Panc1 (cell line): ENCODE measurements at regions of chr18 and their contacts with region 1.

Region 1: DNA sequence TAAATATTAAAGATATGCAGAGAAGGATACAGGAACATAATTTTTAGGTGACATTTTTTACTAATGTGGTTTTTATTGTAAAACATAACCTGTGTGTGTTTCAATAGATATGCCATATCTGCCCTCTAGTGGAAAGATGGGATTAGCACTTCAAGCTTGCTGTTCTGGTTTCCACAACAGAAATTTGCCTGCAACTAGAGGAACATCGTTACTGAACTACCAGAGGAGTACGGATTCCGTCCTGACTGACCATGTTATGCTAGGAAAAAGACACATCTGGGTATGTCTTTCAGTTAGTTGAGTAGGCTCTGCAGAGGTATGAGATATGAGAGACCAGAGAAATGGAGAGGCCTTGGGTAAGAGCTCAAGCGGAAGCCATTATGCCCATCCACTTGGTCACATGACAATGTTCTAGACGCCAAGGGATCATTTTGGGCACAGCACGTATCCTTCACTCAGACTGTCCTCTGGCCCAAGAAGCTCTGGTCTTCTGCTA is 104.9 kb downstream of the MBD2 start:
- DNase-seq: peak; percentile 58
- ATAC-seq: peak; percentile 73; the same call in 1 of the 2 replicates
- H3K4me3 ChIP-seq: peak overlapping the region in 1 of 2 experiments; percentile 37; a peak in 2 of 4 replicates
- H3K27ac ChIP-seq: no peak overlapping the region
- H3K4me1 ChIP-seq: no peaks in the 10 kb centered on the region
- H3K27me3 ChIP-seq: no peaks in the 10 kb centered on the region
- CTCF ChIP-seq: peak; percentile 61

Region 2: DNA sequence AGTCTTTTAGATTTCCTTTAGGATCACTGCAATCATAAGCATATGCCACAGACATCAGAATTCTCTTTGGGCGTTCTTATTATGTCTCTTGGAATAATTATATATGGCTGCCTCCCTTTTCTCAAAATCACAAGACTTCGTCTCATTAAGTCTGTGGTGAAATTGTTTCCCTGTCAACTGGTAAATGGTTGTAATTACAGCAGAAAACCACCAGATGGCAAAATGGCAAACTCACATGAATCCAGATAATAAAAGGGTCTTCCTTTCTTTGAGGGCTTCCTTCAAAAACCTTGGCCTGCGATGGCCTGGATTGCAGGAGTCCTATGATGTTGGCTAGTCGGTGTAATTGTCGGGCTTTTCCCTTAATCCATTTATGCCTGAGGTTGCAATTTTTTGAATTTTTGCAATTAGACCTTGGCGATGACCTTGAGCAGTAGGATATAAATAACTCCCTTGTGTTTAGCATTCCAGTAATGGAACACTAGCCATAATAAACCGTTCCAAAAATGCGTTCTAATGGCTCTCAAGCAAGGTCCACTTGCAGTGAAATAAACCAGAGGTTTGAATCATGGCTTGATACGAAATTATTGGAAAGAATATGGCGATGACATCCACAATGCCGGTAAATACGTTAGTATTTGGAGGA is 551.5 kb before region 1 on chr18:
- CTCF ChIA-PET with region 1: no interaction called
- POLR2A ChIA-PET with region 1: no interaction called
- in situ Hi-C with region 1: no loop called
- intact Hi-C with region 1: loop called (anchors 2 kb)
- DNase-seq: no peak
- ATAC-seq: no peak
- H3K4me3 ChIP-seq: no peak overlapping the region
- H3K27ac ChIP-seq: no peak overlapping the region
- H3K4me1 ChIP-seq: no peaks in the 10 kb centered on the region
- H3K27me3 ChIP-seq: no peaks in the 10 kb centered on the region
- CTCF ChIP-seq: peak; percentile 49

Region 3: DNA sequence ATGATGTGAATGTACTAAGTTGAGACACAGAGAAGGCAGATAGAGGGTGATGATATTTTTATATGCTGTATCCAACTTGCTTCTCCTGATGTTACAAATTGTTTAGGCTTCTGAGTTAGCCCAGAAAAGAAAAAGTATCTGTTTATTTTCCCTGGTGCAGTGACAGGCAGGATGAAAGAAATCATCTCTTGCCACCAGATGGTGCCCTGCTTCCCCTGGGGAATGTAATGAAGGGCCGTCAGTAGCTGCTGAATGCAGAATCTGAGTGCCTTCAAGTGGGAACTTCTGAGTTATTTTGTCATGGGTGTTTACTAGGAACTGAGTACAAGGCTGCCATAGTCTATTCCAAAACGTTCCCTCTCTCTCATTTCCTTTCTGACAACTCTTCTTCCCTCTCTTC is 420.7 kb before region 1 on chr18:
- CTCF ChIA-PET with region 1: interaction called, 3 read pairs
- POLR2A ChIA-PET with region 1: no interaction called
- in situ Hi-C with region 1: no loop called
- intact Hi-C with region 1: loop called (anchors 10 kb)
- DNase-seq: no peak
- ATAC-seq: no peak
- H3K4me3 ChIP-seq: no peak overlapping the region
- H3K27ac ChIP-seq: no peak overlapping the region
- H3K4me1 ChIP-seq: no peaks in the 10 kb centered on the region
- H3K27me3 ChIP-seq: no peaks in the 10 kb centered on the region
- CTCF ChIP-seq: peak; percentile 38

Region 4: GRCh38 chr18:53909668-53910067 is 209.9 kb before region 1 on chr18:
- CTCF ChIA-PET with region 1: no interaction called
- POLR2A ChIA-PET with region 1: no interaction called
- in situ Hi-C with region 1: no loop called
- intact Hi-C with region 1: loop called (anchors 10 kb)
- DNase-seq: no peak
- ATAC-seq: no peak
- H3K4me3 ChIP-seq: no peak overlapping the region
- H3K27ac ChIP-seq: no peak overlapping the region
- H3K4me1 ChIP-seq: no peaks in the 10 kb centered on the region
- H3K27me3 ChIP-seq: no peaks in the 10 kb centered on the region
- CTCF ChIP-seq: peak; percentile 16; the same call in 1 of the 2 replicates

Region 5: GRCh38 chr18:54191352-54191751 is 71.8 kb after region 1 on chr18:
- CTCF ChIA-PET with region 1: no interaction called
- POLR2A ChIA-PET with region 1: no interaction called
- in situ Hi-C with region 1: no loop called
- intact Hi-C with region 1: no loop called
- DNase-seq: no peak
- ATAC-seq: no peak
- H3K4me3 ChIP-seq: no peak overlapping the region
- H3K27ac ChIP-seq: no peak overlapping the region
- H3K4me1 ChIP-seq: no peaks in the 10 kb centered on the region
- H3K27me3 ChIP-seq: no peaks in the 10 kb centered on the region
- CTCF ChIP-seq: no peak

Region 6: GRCh38 chr18:54224379-54225014 is 104.9 kb after region 1 on chr18 and contains the start of gene MBD2:
- CTCF ChIA-PET with region 1: no interaction called
- POLR2A ChIA-PET with region 1: no interaction called
- in situ Hi-C with region 1: no loop called
- intact Hi-C with region 1: no loop called
- DNase-seq: peak; percentile 61
- ATAC-seq: peak; percentile 99
- H3K4me3 ChIP-seq: peak within 1 kb of the TSS; percentile 56 to 68
- H3K27ac ChIP-seq: peak within 1 kb of the TSS; percentile 69
- H3K4me1 ChIP-seq: peaks cover 8% of the 10 kb centered on the region; the same call in 1 of the 2 replicates
- H3K27me3 ChIP-seq: no peaks in the 10 kb centered on the region
- CTCF ChIP-seq: peak; percentile 13; the same call in 1 of the 2 replicates
- total RNA-seq, gene MBD2: 53.3 TPM